Sigmoid colon (tissue), 7 donors: ENCODE measurements at regions of chr11 and their contacts with region 1.

Region 1: GRCh38 chr11:12066799-12067508 is 43.4 kb upstream of the MICAL2 start:
- DNase-seq: peak; percentile 87
- H3K4me3 ChIP-seq: no peak overlapping the region
- H3K27ac ChIP-seq: peak overlapping the region; percentile 71 to 85 (median 78)
- H3K4me1 ChIP-seq: peaks cover 0 to 30% (median 22%) of the 10 kb centered on the region in 4 donors
- H3K27me3 ChIP-seq: no peaks in the 10 kb centered on the region
- CTCF ChIP-seq: no peak
- EP300 ChIP-seq: peak; percentile 42 to 93 (median 72)
- POLR2A ChIP-seq: no peak

Region 2: DNA sequence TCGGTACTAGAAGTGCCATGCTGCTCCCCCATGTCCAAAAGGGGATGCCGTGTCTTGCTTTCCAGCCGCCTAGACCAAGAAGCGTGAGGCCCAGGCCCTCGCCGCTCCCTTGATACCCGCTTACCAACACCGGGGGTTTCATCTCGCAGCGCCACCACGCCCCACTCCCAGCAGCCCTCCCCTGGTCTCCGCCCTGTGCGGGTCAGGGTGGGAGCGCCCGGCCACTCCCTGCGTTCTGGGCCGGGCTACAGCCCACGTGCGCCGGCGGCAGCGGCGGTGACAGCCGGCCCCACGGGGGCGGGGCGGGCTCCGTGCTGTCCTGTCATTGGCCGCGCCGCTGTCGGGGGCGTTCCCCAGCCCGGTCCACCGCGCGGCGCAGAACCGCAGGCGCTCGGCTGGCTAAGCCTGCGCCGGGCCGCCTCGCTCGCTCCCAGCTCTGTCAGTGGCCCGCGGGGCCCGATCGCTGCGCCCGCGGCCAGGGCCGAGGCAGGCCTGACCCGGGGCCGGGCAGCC is 43.3 kb after region 1 on chr11 and contains the start of gene MICAL2:
- intact Hi-C with region 1: loop called (anchors 5 kb)
- DNase-seq: peak; percentile 94
- H3K4me3 ChIP-seq: peak within 1 kb of the TSS; percentile 71 to 99 (median 77)
- H3K27ac ChIP-seq: peak within 1 kb of the TSS; percentile 92 to 98 (median 95)
- H3K4me1 ChIP-seq: peaks cover 0 to 45% (median 38%) of the 10 kb centered on the region in 4 donors
- H3K27me3 ChIP-seq: no peaks in the 10 kb centered on the region
- CTCF ChIP-seq: no peak
- EP300 ChIP-seq: peak in 1 of 4 donors; percentile 5
- POLR2A ChIP-seq: peak in 1 of 2 donors; percentile 29
- total RNA-seq, gene MICAL2: 115 to 145 (median 130) TPM

Region 3: GRCh38 chr11:12269104-12269441 is 202.1 kb after region 1 on chr11:
- intact Hi-C with region 1: loop called (anchors 5 kb)
- DNase-seq: peak; percentile 80
- H3K4me3 ChIP-seq: no peak overlapping the region
- H3K27ac ChIP-seq: peak overlapping the region; percentile 57 to 83 (median 77)
- H3K4me1 ChIP-seq: peaks cover 0 to 32% (median 25%) of the 10 kb centered on the region in 4 donors
- H3K27me3 ChIP-seq: no peaks in the 10 kb centered on the region
- CTCF ChIP-seq: no peak
- EP300 ChIP-seq: no peak
- POLR2A ChIP-seq: no peak